Lower leg skin (tissue), 4 donors: ENCODE measurements at regions of chr3 and their contacts with region 1.

Region 1: DNA sequence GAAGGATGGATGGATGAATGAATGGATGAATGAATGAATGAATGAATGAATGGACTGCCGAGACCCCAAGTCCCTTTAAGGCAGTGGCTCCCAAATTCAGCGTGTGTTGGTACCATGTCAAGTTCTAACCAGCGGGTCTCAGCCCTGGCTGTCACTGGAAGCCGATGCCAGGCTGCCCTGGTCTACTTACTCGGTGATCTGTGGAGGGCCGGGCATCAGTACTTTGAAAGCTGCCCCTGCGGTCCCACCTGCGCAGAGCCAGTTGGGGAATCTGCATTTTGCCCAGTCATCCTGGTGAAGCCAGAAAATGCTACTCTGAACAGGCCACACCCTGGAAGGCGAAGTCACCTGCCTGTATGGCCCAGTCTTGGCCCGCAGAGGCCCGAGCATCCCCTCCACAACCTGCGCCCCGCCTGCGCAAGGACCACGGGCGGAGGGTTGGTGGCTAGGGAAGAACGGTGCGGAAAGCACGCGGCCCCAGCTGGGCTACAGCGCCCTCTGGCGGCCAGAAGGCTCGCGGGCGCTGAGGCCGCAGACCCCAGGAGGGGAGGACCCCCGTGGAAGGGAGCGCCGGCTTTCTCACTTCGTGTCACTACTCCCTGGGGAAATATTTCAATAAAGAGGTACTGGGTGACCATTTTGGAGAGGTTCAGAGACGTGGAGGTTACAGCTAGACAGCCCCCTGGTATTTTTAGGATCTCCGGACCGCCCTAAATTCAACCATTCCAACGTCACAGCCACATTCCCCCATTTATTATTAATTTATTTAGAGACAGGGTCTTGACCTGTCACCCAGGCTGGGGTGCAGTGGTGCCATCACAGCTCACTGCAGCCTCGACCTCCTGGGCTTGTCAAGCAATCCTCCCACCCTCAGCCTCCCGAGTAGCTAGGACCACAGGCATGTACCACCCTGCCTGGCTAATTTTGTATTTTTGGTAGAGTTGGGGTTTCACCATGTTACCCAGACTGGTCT is 34.9 kb downstream of the PRKCD start:
- DNase-seq: no peak
- H3K4me3 ChIP-seq: no peak overlapping the region
- CTCF ChIP-seq: peak in 1 of 3 donors; percentile 82
- POLR2A ChIP-seq: no peak

Region 2: GRCh38 chr3:52990637-52991036 is 205.3 kb before region 1 on chr3:
- intact Hi-C with region 1: no loop called
- DNase-seq: no peak
- H3K4me3 ChIP-seq: no peak overlapping the region
- CTCF ChIP-seq: no peak
- POLR2A ChIP-seq: no peak

Region 3: GRCh38 chr3:53114011-53114400 is 81.9 kb before region 1 on chr3:
- intact Hi-C with region 1: loop called (anchors 5 kb)
- DNase-seq: peak; percentile 82 to 97
- H3K4me3 ChIP-seq: no peak overlapping the region
- CTCF ChIP-seq: peak in 1 of 3 donors; percentile 86
- POLR2A ChIP-seq: no peak

Region 4: GRCh38 chr3:53130179-53131061 is 65.5 kb before region 1 on chr3 and contains the start of gene RFT1:
- intact Hi-C with region 1: loop called (anchors 5 kb)
- DNase-seq: peak; percentile 98 to 100
- H3K4me3 ChIP-seq: peak within 1 kb of the TSS; percentile 93
- CTCF ChIP-seq: no peak
- POLR2A ChIP-seq: no peak
- total RNA-seq, gene RFT1: 8.6 to 16.1 (median 15.5) TPM

Region 5: DNA sequence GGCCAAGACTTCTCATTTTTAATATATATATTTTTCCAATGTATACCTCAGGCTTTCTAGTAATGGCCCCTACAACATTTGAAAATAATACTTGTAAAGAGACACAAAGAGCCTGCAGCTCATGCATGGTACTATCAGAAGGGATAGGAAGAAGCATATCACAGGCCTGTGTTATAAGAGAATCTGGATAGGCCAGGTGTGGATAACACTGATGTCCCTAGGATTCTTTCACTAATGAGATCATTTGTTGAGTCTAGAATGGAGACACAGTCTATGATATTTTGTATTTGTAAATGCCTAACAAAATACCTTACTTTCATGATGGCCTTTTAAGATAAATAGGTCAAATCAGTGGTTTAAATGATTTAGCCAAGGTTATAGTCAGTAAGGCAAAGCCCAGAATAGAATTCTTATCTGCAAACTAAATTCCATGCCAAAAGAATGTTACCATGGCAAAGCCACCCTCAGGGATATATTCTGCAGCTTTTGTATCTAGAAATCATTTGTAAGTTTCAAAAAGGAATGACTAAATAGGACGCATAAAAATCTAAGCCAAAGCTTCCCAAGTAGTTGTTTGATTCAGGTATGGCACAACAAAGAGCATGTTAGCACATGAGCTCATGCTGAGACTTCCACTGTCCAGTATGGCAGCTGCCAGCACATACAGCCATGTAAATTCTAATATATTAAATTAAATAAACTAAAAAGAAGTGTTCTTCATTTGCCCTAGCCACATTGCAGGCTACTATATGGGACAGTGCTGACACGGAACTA is 141.5 kb after region 1 on chr3:
- intact Hi-C with region 1: no loop called
- DNase-seq: no peak
- H3K4me3 ChIP-seq: no peak overlapping the region
- CTCF ChIP-seq: no peak
- POLR2A ChIP-seq: no peak